ENCODE measurements at regions of chr16 and their contacts with region 1.

Region 1: GRCh38 chr16:4766874-4767628 is at the start of gene ZNF500:
- DNase-seq: peak; percentile 97 to 98
- H3K4me3 ChIP-seq: peak within 1 kb of the TSS; percentile 77
- H3K4me3 Mint-ChIP-seq: peak within 1 kb of the TSS; percentile 77
- H3K27ac Mint-ChIP-seq: peak within 1 kb of the TSS; percentile 71
- H3K4me1 ChIP-seq: peaks cover 10% of the 10 kb centered on the region; the same call in 1 of the 2 replicates
- H3K4me1 Mint-ChIP-seq: peaks cover 10% of the 10 kb centered on the region
- H3K27me3 ChIP-seq: no peaks in the 10 kb centered on the region
- H3K27me3 Mint-ChIP-seq: no peaks in the 10 kb centered on the region
- CTCF ChIP-seq: no peak
- total RNA-seq, gene ZNF500: 12.9 and 13.3 TPM in 2 replicates

Region 2: GRCh38 chr16:4574919-4575705 is 191.9 kb before region 1 on chr16:
- CTCF ChIA-PET with region 1: no interaction called
- POLR2A ChIA-PET with region 1: no interaction called
- intact Hi-C with region 1: no loop called
- DNase-seq: no peak
- H3K4me3 ChIP-seq: no peak overlapping the region
- H3K4me3 Mint-ChIP-seq: no peak overlapping the region
- H3K27ac Mint-ChIP-seq: no peak overlapping the region
- H3K4me1 ChIP-seq: no peaks in the 10 kb centered on the region
- H3K4me1 Mint-ChIP-seq: no peaks in the 10 kb centered on the region
- H3K27me3 ChIP-seq: no peaks in the 10 kb centered on the region
- H3K27me3 Mint-ChIP-seq: no peaks in the 10 kb centered on the region
- CTCF ChIP-seq: no peak

Region 3: GRCh38 chr16:4693296-4693955 is 73.6 kb before region 1 on chr16 and contains the start of gene NUDT16L1:
- CTCF ChIA-PET with region 1: no interaction called
- POLR2A ChIA-PET with region 1: no interaction called
- intact Hi-C with region 1: loop called (anchors 2 kb)
- DNase-seq: peak; percentile 92 to 97
- H3K4me3 ChIP-seq: peak within 1 kb of the TSS; percentile 100
- H3K4me3 Mint-ChIP-seq: peak within 1 kb of the TSS; percentile 76
- H3K27ac Mint-ChIP-seq: peak within 1 kb of the TSS; percentile 63
- H3K4me1 ChIP-seq: 0 out of 2 replicates have a peak, but pooled peaks cover 6% of the 10 kb centered on the region
- H3K4me1 Mint-ChIP-seq: no peaks in the 10 kb centered on the region
- H3K27me3 ChIP-seq: no peaks in the 10 kb centered on the region
- H3K27me3 Mint-ChIP-seq: no peaks in the 10 kb centered on the region
- CTCF ChIP-seq: no peak
- total RNA-seq, gene NUDT16L1: 27.9 and 31.3 TPM in 2 replicates

Region 4: GRCh38 chr16:4787627-4788482 is 20.8 kb after region 1 on chr16 and contains the start of gene SEPTIN12:
- CTCF ChIA-PET with region 1: no interaction called
- POLR2A ChIA-PET with region 1: interaction called, 6 read pairs
- intact Hi-C with region 1: loop called (anchors 2 kb)
- DNase-seq: peak; percentile 57 to 67
- H3K4me3 ChIP-seq: no peak within 1 kb of the TSS
- H3K4me3 Mint-ChIP-seq: peak within 1 kb of the TSS; percentile 48
- H3K27ac Mint-ChIP-seq: peak within 1 kb of the TSS; percentile 56
- H3K4me1 ChIP-seq: peaks cover 35% of the 10 kb centered on the region
- H3K4me1 Mint-ChIP-seq: peaks cover 12% of the 10 kb centered on the region
- H3K27me3 ChIP-seq: no peaks in the 10 kb centered on the region
- H3K27me3 Mint-ChIP-seq: no peaks in the 10 kb centered on the region
- CTCF ChIP-seq: no peak
- total RNA-seq, gene SEPTIN12: not detected in 2 replicates

Region 5: GRCh38 chr16:4802659-4803287 is 35.7 kb after region 1 on chr16:
- CTCF ChIA-PET with region 1: no interaction called
- POLR2A ChIA-PET with region 1: no interaction called
- intact Hi-C with region 1: loop called (anchors 1 kb)
- DNase-seq: peak; percentile 94
- H3K4me3 ChIP-seq: peak overlapping the region; percentile 74
- H3K4me3 Mint-ChIP-seq: peak overlapping the region; percentile 77
- H3K27ac Mint-ChIP-seq: peak overlapping the region; percentile 48
- H3K4me1 ChIP-seq: peaks cover 9% of the 10 kb centered on the region; the same call in 1 of the 2 replicates
- H3K4me1 Mint-ChIP-seq: peaks cover 10% of the 10 kb centered on the region
- H3K27me3 ChIP-seq: no peaks in the 10 kb centered on the region
- H3K27me3 Mint-ChIP-seq: no peaks in the 10 kb centered on the region
- CTCF ChIP-seq: no peak

Region 6: GRCh38 chr16:4987580-4988374 is 220.7 kb after region 1 on chr16:
- CTCF ChIA-PET with region 1: no interaction called
- POLR2A ChIA-PET with region 1: no interaction called
- intact Hi-C with region 1: no loop called
- DNase-seq: peak in 1 of 2 experiments; percentile 13
- H3K4me3 ChIP-seq: peak overlapping the region; percentile 32
- H3K4me3 Mint-ChIP-seq: peak overlapping the region; percentile 51
- H3K27ac Mint-ChIP-seq: no peak overlapping the region
- H3K4me1 ChIP-seq: no peaks in the 10 kb centered on the region
- H3K4me1 Mint-ChIP-seq: no peaks in the 10 kb centered on the region
- H3K27me3 ChIP-seq: no peaks in the 10 kb centered on the region
- H3K27me3 Mint-ChIP-seq: peaks cover 8% of the 10 kb centered on the region
- CTCF ChIP-seq: no peak

Measured in Caco-2 (cell line).